HepG2 (cell line): ENCODE measurements at regions of chr2 and their contacts with region 1.

Region 1: DNA sequence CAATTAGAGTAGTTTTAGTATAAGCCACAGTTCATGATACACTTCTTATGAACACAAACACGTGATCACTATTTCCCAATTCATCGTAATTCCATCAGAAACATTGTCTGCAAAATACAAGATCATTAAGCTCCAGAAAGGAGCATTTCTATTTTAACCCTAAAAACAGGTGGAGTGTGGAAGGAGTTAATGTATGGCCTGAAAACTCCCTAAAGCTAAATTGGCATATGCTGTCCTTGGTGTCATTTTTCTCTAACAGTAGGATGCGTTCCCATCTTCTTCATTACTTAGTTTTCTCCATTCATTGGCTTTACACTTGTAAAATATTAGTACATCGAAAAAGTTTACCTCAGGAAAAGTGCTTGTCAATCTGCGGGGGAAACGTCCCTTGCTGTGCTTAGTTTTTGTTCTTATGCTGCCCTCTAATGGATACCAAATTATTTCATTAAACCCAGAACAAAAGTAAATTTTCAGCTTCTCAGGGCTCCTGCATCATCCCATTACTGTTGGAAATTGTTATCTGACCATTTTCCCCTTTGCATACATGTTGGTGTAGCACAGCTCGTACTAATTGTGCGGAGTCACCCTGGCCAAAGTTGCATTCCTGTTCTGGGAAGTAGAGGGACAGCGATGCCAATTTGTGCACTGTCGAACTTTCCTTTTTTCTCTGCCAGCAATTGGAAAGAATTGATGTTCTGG is 153.4 kb downstream of the GPD2 start:
- DNase-seq: peak; percentile 31
- ATAC-seq: peak; percentile 83
- H3K4me3 ChIP-seq: no peak overlapping the region
- H3K27ac ChIP-seq: no peak overlapping the region
- H3K4me1 ChIP-seq: 0 out of 2 replicates have a peak, but pooled peaks cover 8% of the 10 kb centered on the region
- H3K27me3 ChIP-seq: no peaks in the 10 kb centered on the region
- CTCF ChIP-seq: peak; percentile 71
- EP300 ChIP-seq: no peak
- POLR2A ChIP-seq: no peak
- RAD21 ChIP-seq: peak; percentile 65

Region 2: DNA sequence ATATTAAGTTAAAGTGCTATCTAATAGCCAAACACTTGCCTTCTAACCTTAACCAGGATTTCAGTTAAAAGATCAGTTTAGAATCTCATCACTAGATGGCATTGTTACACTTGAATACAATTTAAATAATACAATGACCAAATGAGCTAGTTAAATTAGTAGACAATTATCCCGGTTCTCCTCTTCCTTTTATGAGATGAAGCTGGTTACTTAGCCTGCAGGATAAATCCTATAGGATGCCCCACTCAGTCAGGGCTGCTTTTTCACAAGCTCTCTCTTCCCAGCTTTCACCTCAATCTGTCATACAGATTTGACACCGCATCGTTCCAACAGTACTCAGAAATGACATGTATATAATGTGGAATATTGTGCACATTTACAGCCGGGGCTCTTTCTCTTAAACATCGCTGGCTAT is 1212.3 kb before region 1 on chr2:
- CTCF ChIA-PET with region 1: no interaction called
- POLR2A ChIA-PET with region 1: no interaction called
- in situ Hi-C with region 1: loop called (anchors 5 kb)
- intact Hi-C with region 1: loop called (anchors 1 kb)
- DNase-seq: peak; percentile 7
- ATAC-seq: peak; percentile 43; the same call in 2 of the 3 replicates
- H3K4me3 ChIP-seq: no peak overlapping the region
- H3K27ac ChIP-seq: no peak overlapping the region
- H3K4me1 ChIP-seq: no peaks in the 10 kb centered on the region
- H3K27me3 ChIP-seq: no peaks in the 10 kb centered on the region
- CTCF ChIP-seq: peak; percentile 35
- EP300 ChIP-seq: no peak
- POLR2A ChIP-seq: no peak
- RAD21 ChIP-seq: no peak

Region 3: DNA sequence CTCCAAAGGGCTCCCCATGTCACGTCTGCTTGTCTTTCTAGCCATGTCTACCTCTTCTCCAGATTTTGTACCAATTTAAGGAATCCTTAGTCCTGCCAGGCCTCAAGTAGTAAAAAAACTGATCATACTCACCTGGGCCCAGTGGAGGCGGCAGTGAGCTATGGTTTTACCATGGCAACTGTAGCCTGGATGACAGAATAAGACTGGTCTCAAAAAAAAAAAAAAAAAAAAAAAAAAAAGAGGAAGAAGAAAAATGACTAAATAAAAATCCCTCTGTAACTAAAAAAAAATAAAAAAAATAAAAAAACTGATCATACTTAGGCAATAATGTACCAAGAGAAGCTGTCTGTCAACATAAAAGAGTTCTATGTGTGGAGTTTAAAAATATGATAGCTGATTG is 478.6 kb before region 1 on chr2:
- CTCF ChIA-PET with region 1: no interaction called
- POLR2A ChIA-PET with region 1: no interaction called
- in situ Hi-C with region 1: no loop called
- intact Hi-C with region 1: loop called (anchors 1 kb)
- DNase-seq: peak; percentile 24
- ATAC-seq: peak; percentile 87
- H3K4me3 ChIP-seq: no peak overlapping the region
- H3K27ac ChIP-seq: no peak overlapping the region
- H3K4me1 ChIP-seq: no peaks in the 10 kb centered on the region
- H3K27me3 ChIP-seq: no peaks in the 10 kb centered on the region
- CTCF ChIP-seq: no peak; the same call in 1 of the 2 replicates
- EP300 ChIP-seq: no peak
- POLR2A ChIP-seq: no peak
- RAD21 ChIP-seq: no peak

Region 4: DNA sequence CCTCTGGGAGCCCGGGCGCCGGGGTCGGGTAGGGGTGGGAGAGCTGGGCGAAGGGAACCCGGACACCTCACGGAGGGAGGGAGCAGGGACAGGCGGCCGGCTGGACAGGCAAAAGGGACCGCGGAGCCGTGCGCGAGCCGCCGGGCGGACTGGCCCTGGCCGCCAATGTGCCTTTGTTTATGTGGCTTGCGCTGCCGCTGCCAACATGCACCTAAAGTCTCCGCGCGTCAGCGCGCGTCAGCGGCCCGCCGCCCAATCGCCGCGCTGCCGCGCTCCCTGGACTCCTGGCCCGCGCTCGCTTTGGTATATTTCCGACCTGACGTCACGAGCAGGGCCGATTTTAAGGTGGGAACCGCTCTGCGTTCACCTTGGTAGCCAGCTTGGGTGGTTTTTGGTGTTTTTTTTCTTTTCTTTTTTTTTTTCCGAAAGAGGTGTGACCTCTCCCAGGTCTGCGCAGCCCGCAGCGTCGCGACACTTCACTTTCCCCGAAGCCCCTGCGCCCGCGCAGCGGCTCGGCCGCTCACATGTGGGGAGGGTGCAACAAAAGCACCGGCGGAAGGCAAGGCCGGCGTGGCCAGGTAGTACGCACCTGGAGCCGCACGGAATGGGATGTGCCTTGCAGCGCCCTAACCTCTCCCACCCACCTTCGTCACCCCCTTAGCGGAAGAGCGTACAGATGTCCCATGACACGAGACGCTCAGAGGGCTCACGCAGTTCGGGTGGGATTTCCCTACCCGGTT is 256.8 kb before region 1 on chr2 and contains the start of gene NR4A2:
- CTCF ChIA-PET with region 1: interaction called, 8 read pairs
- POLR2A ChIA-PET with region 1: no interaction called
- in situ Hi-C with region 1: loop called (anchors 5 kb)
- intact Hi-C with region 1: loop called (anchors 1 kb)
- DNase-seq: peak; percentile 16
- ATAC-seq: peak; percentile 60
- H3K4me3 ChIP-seq: peak within 1 kb of the TSS; percentile 51 to 77 (median 63)
- H3K27ac ChIP-seq: no peak within 1 kb of the TSS
- H3K4me1 ChIP-seq: peaks cover 30% of the 10 kb centered on the region
- H3K27me3 ChIP-seq: peaks cover 23 to 75% of the 10 kb centered on the region in 2 experiments
- CTCF ChIP-seq: no peak
- EP300 ChIP-seq: no peak
- POLR2A ChIP-seq: no peak
- RAD21 ChIP-seq: no peak
- total RNA-seq, gene NR4A2: not detected in 2 replicates

Region 5: DNA sequence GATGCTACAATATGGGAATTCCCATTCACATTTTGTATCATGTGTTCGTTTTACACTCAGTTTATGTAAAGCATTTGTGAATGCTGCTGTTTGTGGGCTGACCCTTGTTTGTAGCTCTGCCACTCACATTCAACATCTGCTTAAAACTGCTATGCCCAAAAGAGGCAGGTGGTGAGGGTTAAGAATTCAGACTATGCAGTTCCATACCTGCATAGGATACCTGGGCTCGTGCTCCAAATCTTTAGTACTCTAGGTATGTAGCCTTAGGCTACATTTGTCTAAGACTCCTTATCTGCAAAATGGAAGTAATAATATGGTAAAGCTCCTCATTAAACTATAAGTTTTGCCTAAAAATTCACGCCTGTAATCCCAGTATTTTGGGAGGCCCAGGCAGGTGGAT is 46.1 kb after region 1 on chr2:
- CTCF ChIA-PET with region 1: no interaction called
- POLR2A ChIA-PET with region 1: no interaction called
- in situ Hi-C with region 1: no loop called
- intact Hi-C with region 1: no loop called
- DNase-seq: no peak
- ATAC-seq: no peak
- H3K4me3 ChIP-seq: no peak overlapping the region
- H3K27ac ChIP-seq: no peak overlapping the region
- H3K4me1 ChIP-seq: no peaks in the 10 kb centered on the region
- H3K27me3 ChIP-seq: no peaks in the 10 kb centered on the region
- CTCF ChIP-seq: no peak
- EP300 ChIP-seq: no peak
- POLR2A ChIP-seq: no peak
- RAD21 ChIP-seq: no peak